ENCODE measurements at regions of chr5 and their contacts with region 1.

Region 1: DNA sequence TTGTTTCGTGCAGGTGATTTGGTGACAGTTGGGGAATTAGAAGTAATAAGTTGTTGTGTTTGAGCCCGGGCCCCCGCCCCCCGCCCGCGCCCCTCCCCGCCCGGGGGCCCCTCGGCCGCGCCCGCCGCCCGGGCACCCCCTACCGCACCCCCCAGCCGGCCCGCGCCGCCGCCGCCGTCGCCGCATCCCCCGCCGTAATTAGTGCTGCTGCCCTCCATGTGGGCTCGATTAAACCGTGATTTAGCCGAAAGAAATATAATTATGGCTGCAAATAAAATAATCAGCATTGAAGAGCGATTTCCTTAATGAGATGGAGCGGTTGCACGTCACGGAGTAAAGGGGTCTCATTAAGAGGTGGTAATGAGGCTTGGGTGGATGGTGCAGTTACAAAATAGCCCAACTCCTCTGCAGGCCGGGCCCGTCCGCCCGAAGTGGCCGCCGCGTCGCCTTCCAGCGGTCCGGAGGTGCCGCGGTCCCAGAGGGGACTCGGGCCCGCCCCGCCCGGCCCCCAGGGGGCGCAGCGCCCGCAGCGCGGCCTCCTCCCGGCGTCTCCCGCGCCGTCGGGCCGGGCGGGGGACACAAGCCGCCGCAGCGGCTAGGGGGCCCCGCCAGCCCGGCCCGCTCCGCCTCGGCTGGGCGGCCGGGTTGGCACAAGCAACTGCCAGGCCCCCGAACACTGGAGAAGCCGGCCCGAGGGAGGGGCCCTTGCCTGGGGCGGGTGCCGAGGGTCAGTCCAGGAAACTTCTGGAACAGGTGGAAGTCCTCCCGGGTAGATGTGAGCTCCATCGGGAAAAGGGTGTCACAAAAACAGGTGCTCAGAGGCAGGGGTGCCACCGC is 6.9 kb upstream of the OTP start:
- DNase-seq: no peak

Region 2: GRCh38 chr5:77775790-77776553 is 130.6 kb after region 1 on chr5 and contains the start of gene TBCA:
- intact Hi-C with region 1: loop called (anchors 5 kb)
- DNase-seq: peak; percentile 93
- total RNA-seq, gene TBCA: 130 TPM

Region 3: DNA sequence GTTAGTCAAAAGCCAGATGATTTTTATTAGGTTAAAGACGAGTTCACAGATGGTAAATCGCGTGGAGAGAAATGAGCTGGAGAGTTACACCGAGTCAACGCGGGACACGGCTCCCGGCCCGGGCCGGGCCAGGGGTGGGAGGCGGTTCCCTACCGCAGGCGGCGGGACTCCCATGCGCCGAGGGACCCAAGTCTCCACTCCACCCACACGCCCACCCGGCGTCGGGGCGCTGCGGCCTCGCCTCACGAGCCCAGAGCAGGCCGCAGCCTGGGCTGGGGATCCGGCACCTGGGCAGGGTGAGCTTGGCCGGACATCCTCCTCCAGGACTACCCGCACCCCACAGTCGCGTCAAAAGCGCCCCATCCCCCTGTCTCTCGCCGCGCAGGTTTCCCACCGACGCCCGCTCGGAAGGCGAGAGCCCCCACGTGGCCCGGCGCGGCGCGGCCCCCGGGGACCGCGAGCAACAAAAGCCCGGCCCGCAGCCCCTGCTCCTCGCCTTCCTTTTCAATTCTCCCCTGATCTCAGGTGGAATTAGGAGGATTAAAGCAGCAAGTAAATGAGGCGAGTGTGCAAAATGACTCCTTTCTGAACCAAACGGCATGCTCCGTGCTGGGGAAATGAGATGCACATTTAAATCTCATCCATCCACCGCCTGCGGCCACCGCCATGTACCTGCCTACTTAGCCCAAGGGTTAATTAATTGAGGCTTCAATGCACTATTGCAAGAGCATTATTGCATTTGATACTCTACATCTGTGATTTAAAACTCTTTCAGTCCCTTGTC is 327.3 kb after region 1 on chr5:
- intact Hi-C with region 1: loop called (anchors 10 kb)
- DNase-seq: no peak

Region 4: DNA sequence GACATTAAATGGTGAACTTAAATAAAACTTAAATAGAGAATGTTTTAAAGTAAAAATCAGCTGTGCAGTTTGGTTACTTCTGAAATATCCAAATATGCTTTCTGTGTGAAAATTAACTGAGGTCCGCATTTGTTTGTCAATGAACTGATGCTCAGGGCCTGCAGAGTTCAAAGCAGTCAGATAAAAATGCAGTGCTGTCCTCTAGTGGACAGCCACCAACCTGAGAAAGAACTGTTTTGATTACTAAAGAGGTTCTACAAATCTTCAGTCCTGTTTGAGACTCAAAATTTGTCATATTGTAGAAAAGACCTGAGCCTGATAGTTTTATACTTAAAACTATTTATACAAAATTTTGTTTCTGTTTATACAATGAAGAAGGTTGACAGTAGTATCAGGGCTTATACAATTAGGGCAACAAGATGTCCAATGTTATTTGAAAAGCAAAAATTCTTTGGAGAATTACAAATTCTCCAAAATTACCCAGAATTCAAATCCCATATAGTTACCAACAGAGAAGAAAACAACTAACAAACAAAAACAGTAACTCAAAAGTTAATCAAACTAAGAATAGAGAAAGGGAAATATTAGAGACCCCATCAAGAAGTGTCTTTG is 363.1 kb after region 1 on chr5:
- intact Hi-C with region 1: loop called (anchors 10 kb)
- DNase-seq: no peak

Measured in cardiac septum (tissue), 1 donor.